WTC11 (cell line): ENCODE measurements at regions of chr1 and their contacts with region 1.

Region 1: DNA sequence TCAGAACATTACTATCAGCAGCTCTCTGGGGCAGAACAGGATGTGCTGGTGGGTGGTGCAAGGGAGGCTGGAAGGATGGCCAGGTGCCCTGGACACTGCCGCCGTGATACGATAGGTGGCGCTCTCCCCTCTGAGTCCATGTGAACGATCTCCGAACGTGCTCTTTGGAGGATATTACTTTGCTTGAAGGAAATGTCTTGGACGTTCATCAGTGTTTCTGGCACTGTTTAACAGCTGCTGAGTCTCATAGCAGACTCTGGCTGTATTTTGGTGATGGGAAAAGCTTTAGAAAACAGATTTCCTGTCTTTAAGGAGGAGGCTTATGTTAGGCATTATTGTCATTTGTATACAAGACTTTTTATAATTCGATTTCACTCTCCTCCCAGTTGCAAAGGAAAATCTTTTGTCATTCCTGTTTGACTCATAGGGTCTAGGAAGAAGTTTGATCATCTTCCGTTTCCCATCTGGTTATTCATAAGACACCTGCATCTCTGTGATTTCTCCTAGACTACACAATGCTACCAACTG is 386.2 kb upstream of the ADGRL2 start:
- DNase-seq: peak; percentile 86
- ATAC-seq: peak; percentile 96
- H3K4me3 Mint-ChIP-seq: no peak overlapping the region
- H3K27ac Mint-ChIP-seq: peak overlapping the region; percentile 91
- H3K4me1 Mint-ChIP-seq: peaks cover 57% of the 10 kb centered on the region
- H3K27me3 Mint-ChIP-seq: no peaks in the 10 kb centered on the region
- CTCF ChIP-seq: peak; percentile 96

Region 2: DNA sequence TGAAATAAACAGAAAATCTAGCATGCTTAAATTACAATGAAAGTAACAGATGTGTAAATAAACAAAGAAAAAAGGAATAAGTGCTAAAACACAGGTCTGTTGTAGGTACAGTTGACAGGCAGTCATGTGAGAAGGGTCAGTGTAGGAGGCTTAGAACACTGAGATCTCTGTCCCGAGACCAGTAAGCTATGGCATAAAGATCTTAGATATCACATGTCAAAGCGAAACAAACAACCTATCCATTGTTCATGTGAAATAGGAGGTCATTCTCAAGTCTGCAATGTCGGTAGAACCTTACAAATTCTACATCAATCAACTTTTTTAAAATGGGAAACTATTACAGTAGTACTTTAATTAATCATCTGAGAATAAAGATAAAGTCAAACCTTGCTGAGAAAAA is 42.7 kb before region 1 on chr1:
- CTCF ChIA-PET with region 1: no interaction called
- POLR2A ChIA-PET with region 1: no interaction called
- DNase-seq: no peak
- ATAC-seq: no peak
- H3K4me3 Mint-ChIP-seq: no peak overlapping the region
- H3K27ac Mint-ChIP-seq: no peak overlapping the region
- H3K4me1 Mint-ChIP-seq: peaks cover 21% of the 10 kb centered on the region
- H3K27me3 Mint-ChIP-seq: no peaks in the 10 kb centered on the region
- CTCF ChIP-seq: no peak

Region 3: GRCh38 chr1:81430955-81431623 is 16.5 kb after region 1 on chr1:
- CTCF ChIA-PET with region 1: interaction called, 20 read pairs
- POLR2A ChIA-PET with region 1: no interaction called
- DNase-seq: peak; percentile 30
- ATAC-seq: peak; percentile 60
- H3K4me3 Mint-ChIP-seq: peak overlapping the region; percentile 32
- H3K27ac Mint-ChIP-seq: peak overlapping the region; percentile 93
- H3K4me1 Mint-ChIP-seq: peaks cover 62% of the 10 kb centered on the region
- H3K27me3 Mint-ChIP-seq: no peaks in the 10 kb centered on the region; the same call in 1 of the 2 replicates
- CTCF ChIP-seq: no peak

Region 4: GRCh38 chr1:81512252-81513003 is 97.9 kb after region 1 on chr1:
- CTCF ChIA-PET with region 1: interaction called, 11 read pairs
- POLR2A ChIA-PET with region 1: no interaction called
- DNase-seq: no peak
- ATAC-seq: no peak
- H3K4me3 Mint-ChIP-seq: no peak overlapping the region
- H3K27ac Mint-ChIP-seq: no peak overlapping the region
- H3K4me1 Mint-ChIP-seq: peaks cover 69% of the 10 kb centered on the region
- H3K27me3 Mint-ChIP-seq: no peaks in the 10 kb centered on the region
- CTCF ChIP-seq: no peak